ENCODE measurements at regions of chr5 and their contacts with region 1.

Region 1: DNA sequence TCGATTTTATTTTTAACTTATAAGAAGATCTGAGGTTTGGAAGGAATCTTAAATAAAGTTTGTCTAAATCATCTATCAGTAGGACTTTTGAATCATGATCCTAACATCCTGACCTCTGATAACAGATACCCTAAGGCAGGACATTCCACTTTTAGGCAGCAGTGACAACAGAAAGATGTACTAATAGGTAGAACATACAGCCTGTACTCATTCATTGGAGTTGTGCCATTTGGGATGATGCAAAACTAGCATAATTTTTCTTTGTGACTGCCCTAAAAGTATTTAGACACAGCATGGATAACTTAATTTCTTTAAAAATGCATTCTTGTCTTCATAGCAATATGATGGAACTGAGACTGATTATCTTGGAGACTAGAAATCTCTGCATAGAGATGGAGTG is 39.7 kb downstream of the CDC42SE2 start:
- DNase-seq: peak; percentile 53
- H3K4me3 ChIP-seq: no peak overlapping the region
- H3K27ac ChIP-seq: peak overlapping the region; percentile 38
- H3K4me1 ChIP-seq: peaks cover 31% of the 10 kb centered on the region
- H3K27me3 ChIP-seq: no peaks in the 10 kb centered on the region
- CTCF ChIP-seq: no peak

Region 2: GRCh38 chr5:131338051-131338453 is 34.5 kb after region 1 on chr5:
- CTCF ChIA-PET with region 1: interaction called, 13 read pairs
- POLR2A ChIA-PET with region 1: no interaction called
- intact Hi-C with region 1: no loop called
- DNase-seq: no peak
- H3K4me3 ChIP-seq: no peak overlapping the region
- H3K27ac ChIP-seq: no peak overlapping the region
- H3K4me1 ChIP-seq: no peaks in the 10 kb centered on the region
- H3K27me3 ChIP-seq: no peaks in the 10 kb centered on the region
- CTCF ChIP-seq: no peak

Region 3: DNA sequence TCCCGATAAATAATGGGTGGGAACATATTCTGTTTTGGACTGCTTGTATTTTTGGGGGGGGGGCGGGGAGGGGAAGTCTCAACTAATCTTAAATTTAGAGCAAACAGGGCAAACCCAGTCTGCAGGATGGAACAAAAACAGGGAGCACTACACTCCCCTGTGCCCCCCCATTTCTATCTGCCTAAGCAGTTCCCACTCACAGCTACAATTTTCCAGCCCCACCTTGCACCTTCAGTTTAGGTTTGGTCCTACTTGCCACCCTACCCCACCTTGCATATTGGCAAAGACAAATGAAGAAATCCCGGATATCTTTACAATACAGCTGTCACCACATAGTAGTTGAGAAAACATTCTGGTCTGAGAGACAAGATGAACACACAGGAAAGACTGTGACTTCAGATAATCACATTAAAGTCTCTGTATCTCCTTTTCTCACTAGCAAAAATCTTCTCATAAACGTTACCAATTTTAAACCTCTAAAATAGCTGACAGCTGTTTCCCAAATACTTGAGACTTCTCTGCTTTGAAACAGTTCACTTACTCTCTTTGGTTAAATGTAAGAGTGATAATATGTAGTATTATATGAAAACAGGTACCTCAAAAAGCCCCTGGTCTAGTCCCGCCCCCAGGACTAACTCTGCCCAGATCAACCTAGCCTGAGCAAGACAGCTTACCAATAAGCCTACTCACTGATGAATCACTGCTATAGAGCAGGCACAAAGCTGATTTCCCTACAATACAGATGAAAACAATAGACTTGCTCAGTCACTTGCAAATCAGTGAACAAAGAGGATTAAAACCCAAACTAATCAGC is 336.7 kb after region 1 on chr5:
- CTCF ChIA-PET with region 1: no interaction called
- POLR2A ChIA-PET with region 1: no interaction called
- intact Hi-C with region 1: no loop called
- DNase-seq: no peak
- H3K4me3 ChIP-seq: no peak overlapping the region
- H3K27ac ChIP-seq: no peak overlapping the region
- H3K4me1 ChIP-seq: peaks cover 6% of the 10 kb centered on the region
- H3K27me3 ChIP-seq: no peaks in the 10 kb centered on the region
- CTCF ChIP-seq: no peak